Naive thymus-derived CD4-positive, alpha-beta T cell (primary cell): ENCODE measurements at regions of chr2 and their contacts with region 1.

Region 1: GRCh38 chr2:11688222-11689069 is 18.5 kb upstream of the NTSR2 start:
- DNase-seq: peak; percentile 62 to 82 (median 72)
- ATAC-seq: peak; percentile 93
- H3K4me3 ChIP-seq: peak overlapping the region; percentile 25
- H3K4me3 Mint-ChIP-seq: peak overlapping the region; percentile 25 to 73 (median 54)
- H3K27ac ChIP-seq: no peak overlapping the region
- H3K27ac Mint-ChIP-seq: peak overlapping the region in 2 of 9 donors; percentile 38 to 77
- H3K4me1 ChIP-seq: peaks cover 3 to 7% of the 10 kb centered on the region in 2 donors
- H3K4me1 Mint-ChIP-seq: peaks cover 7 to 19% (median 13%) of the 10 kb centered on the region in 7 donors
- H3K27me3 ChIP-seq: no peaks in the 10 kb centered on the region
- H3K27me3 Mint-ChIP-seq: peaks cover 0 to 21% (median 5%) of the 10 kb centered on the region in 5 donors

Region 2: DNA sequence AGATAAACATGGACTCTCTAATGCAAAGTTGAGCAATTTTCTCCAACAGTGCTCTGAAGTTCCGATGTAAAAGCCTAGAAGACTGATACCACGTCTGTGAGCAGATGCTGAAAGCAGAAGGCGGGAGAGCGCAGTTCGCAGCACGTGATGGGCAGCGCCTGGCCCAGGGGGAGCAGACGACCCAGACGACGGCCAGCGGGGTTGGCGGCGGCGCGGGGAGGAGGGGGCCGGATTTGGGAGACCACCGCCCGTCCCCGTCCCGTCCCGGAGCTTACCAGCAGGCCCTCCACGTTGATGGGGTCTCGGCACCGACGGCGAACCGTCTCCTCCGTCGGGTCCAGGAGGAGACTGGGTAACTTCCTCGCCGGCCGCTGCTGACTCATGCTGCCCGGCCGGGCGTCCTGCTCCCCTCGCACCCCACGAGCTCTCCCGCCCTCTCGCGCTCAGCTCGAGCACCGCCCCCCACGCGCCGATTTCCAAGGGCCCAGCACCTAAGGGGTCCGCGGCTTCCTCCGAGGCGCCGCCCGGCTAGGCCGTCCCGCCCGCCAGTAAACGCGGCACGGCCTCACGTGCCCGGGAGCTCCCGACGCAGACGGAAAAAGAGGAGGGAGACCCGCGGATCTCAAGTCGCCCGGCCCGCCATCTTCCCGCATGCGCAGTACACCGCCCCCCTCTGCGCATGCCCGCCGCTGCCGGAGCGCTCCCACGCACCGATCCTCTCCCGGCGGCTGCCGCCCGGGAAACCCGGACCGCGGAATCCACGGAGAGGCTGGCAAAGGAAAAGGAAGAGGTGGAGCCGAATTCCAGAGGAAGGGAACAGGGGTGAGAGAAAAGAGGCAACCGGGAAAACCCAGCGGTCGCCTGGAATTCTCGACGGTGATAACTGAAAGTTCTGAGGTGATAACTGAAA is 222.7 kb before region 1 on chr2 and contains the start of gene E2F6:
- CTCF ChIA-PET with region 1: interaction called, 3 read pairs
- POLR2A ChIA-PET with region 1: no interaction called
- intact Hi-C with region 1: loop called in 1 of 2 experiments (anchors 5 kb)
- DNase-seq: peak; percentile 80 to 94 (median 87)
- ATAC-seq: peak; percentile 83
- H3K4me3 ChIP-seq: peak within 1 kb of the TSS; percentile 69
- H3K4me3 Mint-ChIP-seq: peak within 1 kb of the TSS; percentile 91 to 99 (median 98)
- H3K27ac ChIP-seq: peak within 1 kb of the TSS; percentile 73
- H3K27ac Mint-ChIP-seq: peak within 1 kb of the TSS; percentile 87 to 97 (median 93)
- H3K4me1 ChIP-seq: peaks cover 5 to 8% of the 10 kb centered on the region in 2 donors
- H3K4me1 Mint-ChIP-seq: peaks cover 27 to 49% (median 39%) of the 10 kb centered on the region in 7 donors
- H3K27me3 ChIP-seq: no peaks in the 10 kb centered on the region
- H3K27me3 Mint-ChIP-seq: peaks cover 0 to 2% (median 0%) of the 10 kb centered on the region in 5 donors
- total RNA-seq, gene E2F6: 6.2 to 11.6 (median 9.2) TPM

Region 3: GRCh38 chr2:11477994-11478393 is 210.5 kb before region 1 on chr2:
- CTCF ChIA-PET with region 1: no interaction called
- POLR2A ChIA-PET with region 1: no interaction called
- intact Hi-C with region 1: loop called in 1 of 2 experiments (anchors 5 kb)
- DNase-seq: peak; percentile 44 to 79 (median 63)
- ATAC-seq: peak; percentile 77
- H3K4me3 ChIP-seq: no peak overlapping the region
- H3K4me3 Mint-ChIP-seq: no peak overlapping the region
- H3K27ac ChIP-seq: no peak overlapping the region
- H3K27ac Mint-ChIP-seq: no peak overlapping the region
- H3K4me1 ChIP-seq: no peaks in the 10 kb centered on the region
- H3K4me1 Mint-ChIP-seq: peaks cover 0 to 8% (median 6%) of the 10 kb centered on the region in 7 donors
- H3K27me3 ChIP-seq: no peaks in the 10 kb centered on the region
- H3K27me3 Mint-ChIP-seq: peaks cover 28 to 39% (median 32%) of the 10 kb centered on the region in 5 donors

Region 4: DNA sequence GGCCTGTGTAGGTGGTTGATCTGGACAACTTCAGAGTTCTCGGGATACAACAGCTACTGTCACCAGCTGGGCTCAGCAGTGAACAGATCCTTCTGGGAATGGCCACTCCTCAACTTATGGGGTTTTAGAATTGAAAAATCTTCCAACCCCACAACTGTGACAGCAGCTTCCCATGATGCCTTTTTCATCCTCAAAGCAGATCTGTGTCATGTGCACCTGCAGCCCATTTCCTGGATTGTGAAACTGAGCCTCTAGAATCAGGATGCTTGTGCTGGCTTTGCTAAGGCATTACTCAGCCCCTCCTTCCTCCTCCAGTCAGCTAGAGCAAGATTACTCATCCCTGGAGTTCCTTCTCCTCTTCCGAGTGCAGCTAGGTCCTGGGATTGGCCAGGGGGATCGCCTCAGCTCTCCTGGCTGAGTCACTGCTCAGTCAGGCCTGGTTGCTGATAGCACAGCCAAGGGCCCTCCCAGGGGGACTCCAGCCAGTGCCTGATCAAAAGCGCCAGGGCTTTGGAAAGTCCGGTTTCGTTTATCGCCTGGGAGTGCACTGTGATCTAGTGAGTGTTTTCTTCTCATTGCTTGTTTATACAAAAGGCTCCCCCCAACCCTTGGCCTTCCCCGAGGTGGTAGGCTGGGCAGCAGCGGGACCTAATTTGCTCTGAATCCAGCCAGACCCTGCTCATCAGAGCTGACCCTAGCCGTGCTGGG is 55.6 kb after region 1 on chr2:
- CTCF ChIA-PET with region 1: interaction called, 5 read pairs
- POLR2A ChIA-PET with region 1: interaction called, 4 read pairs
- intact Hi-C with region 1: loop called (anchors 1 kb)
- DNase-seq: peak in 1 of 9 donors; percentile 80
- ATAC-seq: peak; percentile 64
- H3K4me3 ChIP-seq: peak overlapping the region; percentile 35
- H3K4me3 Mint-ChIP-seq: peak overlapping the region in 7 of 10 donors; percentile 38 to 81 (median 65)
- H3K27ac ChIP-seq: no peak overlapping the region
- H3K27ac Mint-ChIP-seq: peak overlapping the region in 4 of 9 donors; percentile 22 to 97 (median 62)
- H3K4me1 ChIP-seq: peaks cover 33 to 41% of the 10 kb centered on the region in 2 donors
- H3K4me1 Mint-ChIP-seq: peaks cover 18 to 50% (median 45%) of the 10 kb centered on the region in 7 donors
- H3K27me3 ChIP-seq: no peaks in the 10 kb centered on the region
- H3K27me3 Mint-ChIP-seq: no peaks in the 10 kb centered on the region

Region 5: DNA sequence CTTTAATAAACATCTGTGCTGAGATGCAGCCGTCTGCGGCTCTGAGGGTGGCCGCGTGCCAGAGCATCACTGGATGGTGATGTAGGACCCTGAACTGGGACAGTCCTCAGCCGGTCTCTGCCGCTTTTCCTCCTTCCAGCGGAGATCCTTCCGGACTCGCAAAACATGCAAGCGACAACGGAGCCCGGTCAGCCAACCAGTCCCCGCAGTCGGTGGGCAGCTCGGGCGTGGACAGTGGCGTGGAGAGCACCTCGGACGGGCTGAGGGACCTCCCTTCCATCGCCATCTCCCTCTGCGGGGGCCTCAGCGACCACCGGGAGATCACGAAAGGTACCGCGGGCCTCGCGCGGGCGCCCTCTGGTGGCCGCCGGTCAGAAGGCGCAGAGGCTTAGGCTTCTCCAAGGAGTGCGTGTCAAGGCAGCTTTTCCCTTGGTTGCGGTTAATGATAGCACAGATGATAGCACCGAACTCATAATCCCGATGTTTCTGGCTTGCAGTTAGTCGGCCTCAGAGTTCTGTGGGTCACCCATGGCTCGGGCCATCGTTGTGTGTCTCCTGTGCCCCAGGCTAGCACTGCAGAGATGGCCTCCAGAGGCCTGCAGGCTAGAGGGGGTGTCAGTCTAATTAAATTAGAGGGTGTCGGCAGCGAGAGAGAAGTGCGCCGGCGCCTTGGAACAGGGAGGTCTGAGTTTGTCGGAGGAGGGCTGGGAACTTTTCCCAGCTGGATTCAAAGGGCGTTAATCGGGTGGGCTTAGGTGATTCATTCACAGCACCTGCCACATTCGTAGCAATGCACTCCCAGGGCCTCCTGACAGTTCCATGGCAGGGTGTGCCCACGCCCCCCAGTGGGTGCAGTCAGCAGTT is 96.5 kb after region 1 on chr2:
- CTCF ChIA-PET with region 1: interaction called, 110 read pairs
- POLR2A ChIA-PET with region 1: interaction called, 4 read pairs
- intact Hi-C with region 1: no loop called
- DNase-seq: peak; percentile 12 to 65 (median 34)
- ATAC-seq: peak; percentile 70
- H3K4me3 ChIP-seq: no peak overlapping the region
- H3K4me3 Mint-ChIP-seq: no peak overlapping the region
- H3K27ac ChIP-seq: no peak overlapping the region
- H3K27ac Mint-ChIP-seq: peak overlapping the region in 2 of 9 donors; percentile 1 to 25
- H3K4me1 ChIP-seq: no peaks in the 10 kb centered on the region
- H3K4me1 Mint-ChIP-seq: peaks cover 0 to 6% (median 5%) of the 10 kb centered on the region in 7 donors
- H3K27me3 ChIP-seq: no peaks in the 10 kb centered on the region
- H3K27me3 Mint-ChIP-seq: no peaks in the 10 kb centered on the region